ENCODE measurements at regions of chr5 and their contacts with region 1.

Region 1: DNA sequence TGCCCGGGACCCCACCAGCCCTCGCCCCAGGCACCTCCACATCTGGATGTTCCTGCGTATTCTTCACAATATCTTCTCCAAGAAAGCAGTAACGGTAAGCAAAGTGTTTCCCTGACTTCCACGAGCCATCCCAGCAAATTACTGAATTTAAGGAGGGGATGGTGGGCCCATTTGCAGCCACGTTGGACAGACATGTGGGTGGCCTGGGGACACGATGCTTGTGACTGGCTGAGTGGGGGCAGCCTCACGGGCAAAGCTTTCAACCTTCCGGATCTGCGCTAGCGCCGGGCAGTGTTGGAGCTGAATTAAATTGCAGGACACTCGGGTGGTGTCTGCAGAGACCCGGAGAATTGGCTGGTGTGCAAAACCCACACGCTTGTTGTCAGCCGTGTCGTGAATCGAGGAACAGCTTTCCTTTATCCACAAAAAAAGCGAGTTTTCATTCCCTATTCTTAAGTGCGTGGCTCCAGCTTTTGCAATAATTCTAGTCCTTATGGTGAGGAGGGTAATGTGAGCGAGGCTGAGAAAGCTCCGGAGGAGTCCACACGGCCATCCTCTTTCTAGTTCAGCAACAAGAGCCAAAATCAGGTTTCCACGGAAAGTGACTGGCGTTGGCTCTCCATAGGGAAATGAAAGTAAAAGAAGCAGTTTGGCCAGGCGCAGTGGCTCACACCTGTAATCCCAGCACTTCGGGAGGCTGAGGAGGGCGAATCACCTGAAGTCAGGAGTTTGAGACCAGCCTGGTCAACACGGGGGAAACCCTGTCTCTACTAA is 17.5 kb upstream of the CLPTM1L start:
- DNase-seq: no peak

Region 2: GRCh38 chr5:1383886-1384401 is 21.5 kb after region 1 on chr5:
- intact Hi-C with region 1: loop called in 1 of 2 experiments (anchors 1 kb)
- DNase-seq: no peak

Region 3: GRCh38 chr5:1401536-1402138 is 39.2 kb after region 1 on chr5:
- intact Hi-C with region 1: no loop called
- DNase-seq: no peak